ENCODE measurements at regions of chr1 and their contacts with region 1.

Region 1: DNA sequence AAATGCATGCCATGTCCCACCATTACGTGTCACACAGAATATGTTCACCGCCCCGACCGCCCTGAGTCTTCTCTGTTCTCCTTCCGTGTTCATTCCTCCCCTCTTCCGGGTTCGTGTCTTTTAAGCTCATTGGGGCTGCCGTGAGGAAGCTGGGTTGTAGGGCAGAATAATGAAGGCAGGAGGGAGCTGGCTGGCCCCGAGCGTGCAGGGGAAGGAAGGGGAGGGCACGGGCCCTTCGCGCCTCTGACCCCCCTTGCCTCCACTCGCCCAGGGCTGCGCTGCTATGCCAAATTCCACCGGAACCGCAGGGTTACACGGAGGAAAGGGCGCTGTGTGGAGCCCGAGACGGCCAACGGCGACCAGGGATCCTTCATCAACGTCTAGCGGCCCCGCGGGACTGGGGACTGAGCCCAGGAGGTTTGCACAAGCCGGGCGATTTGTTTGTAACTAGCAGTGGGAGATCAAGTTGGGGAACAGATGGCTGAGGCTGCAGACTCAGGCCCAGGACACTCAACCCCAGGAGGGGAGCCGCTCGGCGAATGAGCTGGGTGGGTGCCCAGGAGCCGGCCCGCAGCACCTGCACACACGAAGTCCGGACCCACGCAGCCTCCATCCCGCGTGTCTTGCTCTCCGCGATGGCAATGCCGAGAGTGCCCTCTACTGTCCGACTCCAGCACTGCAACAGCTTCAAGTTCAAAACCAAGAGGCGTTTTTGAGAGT is 16.5 kb upstream of the AGTRAP start:
- DNase-seq: peak; percentile 64
- H3K4me3 ChIP-seq: peak overlapping the region; percentile 55
- H3K27ac ChIP-seq: no peak overlapping the region
- H3K4me1 ChIP-seq: no peaks in the 10 kb centered on the region
- H3K27me3 ChIP-seq: peaks cover 19% of the 10 kb centered on the region; the same call in 1 of the 2 replicates

Region 2: DNA sequence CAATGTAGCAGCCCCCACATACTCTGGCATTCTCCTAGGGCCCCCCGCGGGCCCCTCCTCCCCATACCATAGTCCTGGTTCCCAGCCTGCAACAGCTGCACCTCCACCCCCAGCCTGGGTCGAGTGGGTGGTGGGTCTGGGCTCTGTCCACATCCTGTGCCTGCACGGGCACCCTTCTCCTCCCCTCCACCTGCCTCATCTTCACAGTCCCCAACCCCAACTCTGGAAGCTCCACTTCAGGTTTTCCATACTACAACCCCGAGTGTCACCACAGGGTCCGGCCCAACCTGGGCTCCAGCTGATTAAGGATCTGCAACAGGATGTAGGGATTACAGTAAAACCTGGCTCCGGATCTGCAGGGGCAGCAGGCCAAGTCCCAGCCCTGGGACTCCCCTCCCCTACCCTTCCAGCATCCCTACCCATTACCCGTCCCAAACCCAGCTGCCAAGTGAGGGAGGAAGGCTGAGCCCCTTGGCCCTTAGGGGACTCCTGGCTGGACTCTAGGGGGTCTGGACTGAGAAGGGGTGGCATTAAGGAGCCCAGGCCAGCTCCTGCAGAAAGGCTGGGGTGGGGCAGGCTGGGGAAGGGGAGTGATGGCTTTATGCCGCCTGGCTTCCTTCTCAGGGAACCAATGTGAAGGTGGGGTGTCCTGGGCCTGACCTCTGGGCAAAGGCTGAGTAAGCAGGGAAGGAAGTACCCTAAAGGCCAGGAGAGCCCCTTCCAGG is 1039.8 kb before region 1 on chr1:
- in situ Hi-C with region 1: no loop called
- DNase-seq: peak; percentile 57
- H3K4me3 ChIP-seq: no peak overlapping the region
- H3K27ac ChIP-seq: no peak overlapping the region
- H3K4me1 ChIP-seq: no peaks in the 10 kb centered on the region
- H3K27me3 ChIP-seq: no peaks in the 10 kb centered on the region

Region 3: DNA sequence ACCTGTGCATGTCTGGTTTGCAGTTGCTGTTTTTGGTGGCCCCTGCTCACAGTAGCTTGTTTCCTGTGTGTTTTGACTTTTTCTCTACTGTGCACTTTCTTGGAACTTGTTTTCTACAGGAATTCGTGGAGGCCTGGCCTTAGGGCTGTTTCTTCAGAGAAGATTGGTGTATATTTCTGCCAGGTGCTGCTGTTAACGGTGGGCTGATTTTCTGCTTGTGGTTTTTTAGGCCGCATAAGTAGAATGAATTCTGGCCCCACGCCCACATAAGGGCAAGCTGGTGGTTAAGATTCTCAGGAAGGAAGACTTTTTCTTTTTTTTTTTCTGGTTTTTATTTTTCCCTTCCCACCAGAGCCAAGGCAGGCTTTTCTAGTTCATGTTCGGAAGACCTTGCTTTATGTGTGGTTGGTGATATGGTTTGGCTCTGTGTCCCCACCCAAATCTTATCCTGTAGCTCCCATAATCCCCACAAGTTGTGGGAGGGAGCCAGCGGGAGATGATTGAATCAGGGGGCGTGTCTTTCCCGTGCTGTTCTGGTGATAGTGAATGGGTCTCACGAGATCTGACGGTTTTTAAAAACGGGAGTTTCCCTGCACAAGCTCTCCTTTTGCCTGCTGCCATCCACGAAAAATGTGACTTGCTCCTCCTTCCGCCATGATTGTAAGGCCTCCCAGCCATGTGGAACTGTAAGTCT is 312.0 kb before region 1 on chr1:
- in situ Hi-C with region 1: no loop called
- DNase-seq: no peak
- H3K4me3 ChIP-seq: no peak overlapping the region
- H3K27ac ChIP-seq: no peak overlapping the region
- H3K4me1 ChIP-seq: no peaks in the 10 kb centered on the region
- H3K27me3 ChIP-seq: peaks cover 4% of the 10 kb centered on the region

Region 4: DNA sequence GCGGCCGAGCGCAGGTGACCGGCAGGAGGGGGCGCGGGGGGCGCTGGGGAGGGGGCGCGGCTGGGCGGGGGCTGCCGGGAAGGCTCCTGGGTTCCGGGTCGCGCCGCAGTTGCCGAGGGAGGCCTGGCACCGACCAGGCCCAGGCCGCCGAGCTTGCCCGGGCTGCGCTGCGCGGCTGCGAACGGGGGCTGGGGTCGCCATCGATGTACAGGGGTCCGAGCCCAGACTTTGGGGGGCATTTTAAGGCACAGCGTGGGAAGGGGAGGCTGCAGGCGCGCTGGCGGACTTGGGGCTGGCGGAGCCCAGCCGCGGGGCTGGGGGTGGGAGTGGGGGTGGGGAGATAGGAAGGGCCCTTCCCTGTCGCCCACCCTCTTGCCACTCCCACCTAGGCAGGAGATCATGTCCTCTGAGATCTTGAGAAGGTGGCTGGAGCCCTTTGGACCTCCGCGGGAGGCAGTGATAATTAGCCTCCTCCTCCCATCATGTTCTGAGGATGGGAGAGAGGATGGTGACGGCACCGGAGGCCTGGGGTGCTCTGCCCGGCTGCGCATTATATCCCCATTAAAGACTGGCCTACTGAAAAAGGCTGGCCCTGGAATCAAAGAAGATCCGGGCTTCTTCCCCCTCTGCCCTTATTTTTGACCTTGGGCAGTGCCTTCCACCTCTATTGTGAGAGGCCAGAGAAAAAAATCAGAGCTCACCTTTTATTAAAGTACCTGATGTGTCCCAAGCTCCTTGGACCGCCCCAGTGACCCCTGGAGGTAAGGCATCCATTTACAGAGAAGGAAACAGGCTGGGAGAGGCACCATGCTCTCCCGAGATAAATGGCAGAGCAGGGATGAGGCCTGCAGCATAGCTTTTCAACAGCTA is 64.3 kb before region 1 on chr1:
- in situ Hi-C with region 1: loop called (anchors 5 kb)
- DNase-seq: no peak
- H3K4me3 ChIP-seq: peak overlapping the region; percentile 61
- H3K27ac ChIP-seq: no peak overlapping the region
- H3K4me1 ChIP-seq: no peaks in the 10 kb centered on the region
- H3K27me3 ChIP-seq: no peaks in the 10 kb centered on the region

Region 5: DNA sequence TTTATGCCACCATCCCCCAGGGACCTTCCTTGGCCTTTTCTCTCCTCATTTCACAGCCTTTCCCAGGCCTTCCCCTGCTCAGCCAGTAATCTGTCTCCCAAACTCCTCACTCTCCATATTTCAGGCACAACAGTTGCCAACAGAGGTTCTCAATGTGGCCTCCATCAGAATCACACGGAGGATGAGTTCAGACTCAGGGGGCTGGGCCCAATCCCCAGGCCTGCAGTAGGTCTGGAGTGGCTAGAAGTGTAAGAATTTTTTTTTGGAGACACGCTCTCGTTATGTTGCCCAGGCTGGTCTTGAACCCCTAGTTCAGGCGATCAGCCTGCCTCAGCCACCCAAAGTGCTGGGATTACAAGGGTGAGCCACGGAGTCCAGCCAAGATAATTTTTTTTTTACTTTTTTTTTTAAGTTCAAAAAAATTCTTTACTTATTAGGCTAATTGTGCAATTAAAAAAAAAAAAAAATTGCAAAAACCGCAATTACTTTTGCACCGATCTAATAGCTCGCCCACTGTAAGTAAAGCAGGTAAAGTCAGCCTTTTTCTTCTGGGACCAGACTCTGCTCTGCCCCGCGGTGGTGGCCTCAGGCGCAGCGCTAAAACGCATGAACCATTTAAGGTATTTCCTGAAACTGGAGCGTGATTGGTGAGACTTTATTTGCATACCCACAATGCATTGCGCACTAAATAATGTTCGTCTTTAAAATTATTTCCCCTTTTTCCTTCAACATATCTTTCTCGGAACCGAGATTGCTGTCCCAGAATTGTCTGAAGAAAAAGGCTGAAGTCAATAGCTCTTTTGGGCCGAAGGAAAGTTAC is 188.0 kb after region 1 on chr1:
- in situ Hi-C with region 1: no loop called
- DNase-seq: peak; percentile 96
- H3K4me3 ChIP-seq: peak overlapping the region; percentile 49
- H3K27ac ChIP-seq: peak overlapping the region; percentile 99
- H3K4me1 ChIP-seq: no peaks in the 10 kb centered on the region
- H3K27me3 ChIP-seq: no peaks in the 10 kb centered on the region